T-cell (primary cell): ENCODE measurements at regions of chr11 and their contacts with region 1.

Region 1: GRCh38 chr11:35071722-35072121 is 67.2 kb upstream of the CD44 start:
- DNase-seq: no peak
- ATAC-seq: no peak
- H3K4me3 ChIP-seq: no peak overlapping the region
- H3K4me3 Mint-ChIP-seq: peak overlapping the region in 1 of 3 donors; percentile 20
- H3K27ac ChIP-seq: no peak overlapping the region
- H3K27ac Mint-ChIP-seq: peak overlapping the region; percentile 36 to 56
- H3K4me1 ChIP-seq: peaks cover 19 to 21% of the 10 kb centered on the region in 2 experiments
- H3K4me1 Mint-ChIP-seq: peaks cover 58 to 73% (median 60%) of the 10 kb centered on the region in 3 donors
- H3K27me3 ChIP-seq: no peaks in the 10 kb centered on the region
- H3K27me3 Mint-ChIP-seq: no peaks in the 10 kb centered on the region

Region 2: DNA sequence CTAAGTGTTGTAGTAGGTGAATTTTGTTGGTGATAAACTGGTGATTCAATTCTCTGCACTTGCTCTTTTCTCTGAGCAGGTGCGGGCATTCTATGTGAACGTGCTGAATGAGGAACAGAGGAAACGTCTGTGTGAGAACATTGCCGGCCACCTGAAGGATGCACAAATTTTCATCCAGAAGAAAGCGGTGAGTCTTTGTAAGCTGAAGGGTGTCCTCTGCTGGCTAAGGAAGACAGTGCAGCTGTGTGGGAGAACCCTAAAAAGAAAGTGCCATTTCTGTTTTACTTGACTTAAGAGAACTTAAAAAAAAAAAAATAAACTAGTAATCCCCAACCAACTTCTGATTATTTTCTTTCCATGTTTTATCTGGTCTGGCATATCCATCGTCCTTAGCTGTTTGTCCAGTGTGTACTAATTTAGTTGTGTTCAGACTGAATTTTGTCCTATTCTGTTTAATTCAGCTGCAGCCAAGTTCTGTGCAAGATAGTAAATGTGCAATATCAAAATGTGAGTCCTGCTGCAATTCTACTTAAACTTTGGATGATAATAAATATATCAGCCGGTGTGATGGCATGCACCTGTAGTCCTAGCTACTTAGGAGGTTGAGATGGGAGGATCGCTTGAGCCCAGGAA is 603.4 kb before region 1 on chr11:
- CTCF ChIA-PET with region 1: no interaction called
- POLR2A ChIA-PET with region 1: no interaction called
- DNase-seq: peak in 24 of 35 experiments; percentile 4 to 56 (median 18)
- ATAC-seq: peak in 2 of 4 experiments; percentile 38 to 47
- H3K4me3 ChIP-seq: no peak overlapping the region
- H3K4me3 Mint-ChIP-seq: no peak overlapping the region
- H3K27ac ChIP-seq: no peak overlapping the region
- H3K27ac Mint-ChIP-seq: no peak overlapping the region
- H3K4me1 ChIP-seq: no peaks in the 10 kb centered on the region
- H3K4me1 Mint-ChIP-seq: peaks cover 4 to 10% (median 6%) of the 10 kb centered on the region in 3 donors
- H3K27me3 ChIP-seq: no peaks in the 10 kb centered on the region
- H3K27me3 Mint-ChIP-seq: no peaks in the 10 kb centered on the region

Region 3: GRCh38 chr11:35035894-35036408 is 35.8 kb before region 1 on chr11:
- CTCF ChIA-PET with region 1: no interaction called
- POLR2A ChIA-PET with region 1: no interaction called
- DNase-seq: no peak
- ATAC-seq: no peak
- H3K4me3 ChIP-seq: no peak overlapping the region
- H3K4me3 Mint-ChIP-seq: no peak overlapping the region
- H3K27ac ChIP-seq: no peak overlapping the region
- H3K27ac Mint-ChIP-seq: no peak overlapping the region
- H3K4me1 ChIP-seq: peaks cover 10 to 20% of the 10 kb centered on the region in 2 experiments
- H3K4me1 Mint-ChIP-seq: peaks cover 38 to 74% (median 61%) of the 10 kb centered on the region in 3 donors
- H3K27me3 ChIP-seq: no peaks in the 10 kb centered on the region
- H3K27me3 Mint-ChIP-seq: no peaks in the 10 kb centered on the region

Region 4: GRCh38 chr11:35056431-35057020 is 15.2 kb before region 1 on chr11:
- CTCF ChIA-PET with region 1: interaction called in 1 of 2 experiments, 3 read pairs
- POLR2A ChIA-PET with region 1: interaction called in 1 of 2 experiments, 10 read pairs
- DNase-seq: no peak
- ATAC-seq: no peak
- H3K4me3 ChIP-seq: no peak overlapping the region
- H3K4me3 Mint-ChIP-seq: no peak overlapping the region
- H3K27ac ChIP-seq: no peak overlapping the region
- H3K27ac Mint-ChIP-seq: peak overlapping the region in 1 of 2 donors; percentile 66
- H3K4me1 ChIP-seq: peaks cover 21 to 27% of the 10 kb centered on the region in 2 experiments
- H3K4me1 Mint-ChIP-seq: peaks cover 51 to 57% (median 54%) of the 10 kb centered on the region in 3 donors
- H3K27me3 ChIP-seq: no peaks in the 10 kb centered on the region
- H3K27me3 Mint-ChIP-seq: no peaks in the 10 kb centered on the region